ENCODE measurements at regions of chr14 and their contacts with region 1.

Region 1: GRCh38 chr14:76456200-76456599 is 80.3 kb downstream of the ESRRB start:
- DNase-seq: peak; percentile 40
- ATAC-seq: peak; percentile 56
- H3K4me3 Mint-ChIP-seq: no peak overlapping the region
- H3K27ac Mint-ChIP-seq: no peak overlapping the region
- H3K4me1 Mint-ChIP-seq: no peaks in the 10 kb centered on the region
- H3K27me3 Mint-ChIP-seq: peaks cover 14% of the 10 kb centered on the region
- CTCF ChIP-seq: peak; percentile 54

Region 2: DNA sequence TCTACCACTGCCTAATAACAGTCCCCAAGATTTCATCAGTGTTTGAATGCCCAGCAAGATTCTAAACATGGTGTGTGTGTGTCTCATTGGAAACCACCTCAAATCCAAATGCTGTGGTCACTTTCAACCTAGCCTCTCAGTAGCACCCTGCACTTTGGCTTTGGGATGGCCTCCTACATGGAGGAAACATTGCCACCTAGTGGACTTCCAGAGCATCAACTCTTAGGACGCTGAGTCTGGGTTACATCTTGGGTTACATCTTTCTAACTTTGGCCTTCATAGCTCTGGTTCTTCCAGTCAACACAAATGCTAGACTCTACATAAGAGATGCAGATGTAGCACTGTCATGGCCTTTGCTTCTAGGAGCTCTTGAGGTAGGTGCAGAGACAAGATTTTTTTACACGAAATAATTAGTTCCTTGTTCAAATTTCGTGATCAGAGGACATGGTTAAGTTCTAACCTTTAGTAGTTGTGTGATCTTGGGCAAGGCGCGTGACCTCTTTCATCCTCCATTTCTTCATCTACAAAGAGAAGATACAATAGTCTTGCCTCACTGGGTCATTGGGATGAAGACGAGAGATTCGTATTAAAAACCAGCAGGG is 191.6 kb after region 1 on chr14:
- CTCF ChIA-PET with region 1: interaction called, 18 read pairs
- POLR2A ChIA-PET with region 1: no interaction called
- intact Hi-C with region 1: loop called (anchors 5 kb)
- DNase-seq: peak; percentile 26
- ATAC-seq: no peak
- H3K4me3 Mint-ChIP-seq: no peak overlapping the region
- H3K27ac Mint-ChIP-seq: no peak overlapping the region
- H3K4me1 Mint-ChIP-seq: no peaks in the 10 kb centered on the region
- H3K27me3 Mint-ChIP-seq: peaks cover 2% of the 10 kb centered on the region
- CTCF ChIP-seq: peak; percentile 85